ENCODE measurements at regions of chr3 and their contacts with region 1.

Region 1: DNA sequence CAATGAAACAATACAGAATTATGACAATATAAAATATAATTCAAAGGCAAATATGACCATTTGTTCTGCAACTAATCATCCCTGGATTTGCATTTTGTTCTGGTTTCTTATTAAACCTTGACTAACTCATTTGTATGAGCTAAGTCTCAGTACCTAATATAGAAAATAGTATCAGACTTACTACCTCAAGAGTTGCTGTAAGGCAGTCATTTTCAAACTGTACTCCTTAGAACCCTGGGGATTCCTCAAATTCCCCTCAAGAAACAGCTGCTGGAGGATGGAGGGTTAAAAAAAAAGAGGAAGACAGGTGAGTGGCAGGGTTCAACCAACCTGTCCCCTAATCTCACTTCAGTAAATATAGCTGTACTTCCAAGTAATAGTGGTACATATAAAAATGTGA is 11.1 kb downstream of the ZBTB11 start:
- DNase-seq: no peak
- ATAC-seq: no peak
- H3K4me3 ChIP-seq: no peak overlapping the region
- H3K27ac ChIP-seq: no peak overlapping the region
- H3K4me1 ChIP-seq: no peaks in the 10 kb centered on the region
- H3K27me3 ChIP-seq: no peaks in the 10 kb centered on the region

Region 2: DNA sequence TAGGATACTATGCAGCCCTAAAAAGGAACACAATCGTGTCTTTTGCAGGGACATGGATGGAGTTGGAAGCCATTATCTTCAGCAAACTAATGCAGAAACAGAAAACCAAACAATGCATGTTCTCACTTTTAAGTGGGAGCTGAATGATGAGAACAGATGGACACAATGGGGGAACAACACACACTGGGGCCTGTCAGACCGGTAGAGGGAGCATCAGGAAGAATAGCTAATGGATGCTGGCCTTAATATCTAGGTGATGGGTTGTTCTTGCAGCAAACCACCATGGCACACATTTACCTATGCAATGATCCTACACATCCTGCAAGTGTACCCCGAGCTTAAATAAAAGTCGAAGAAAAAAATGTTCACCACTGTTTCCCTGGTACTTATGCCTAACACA is 170.3 kb before region 1 on chr3:
- intact Hi-C with region 1: no loop called
- DNase-seq: no peak
- ATAC-seq: no peak
- H3K4me3 ChIP-seq: no peak overlapping the region
- H3K27ac ChIP-seq: no peak overlapping the region
- H3K4me1 ChIP-seq: no peaks in the 10 kb centered on the region
- H3K27me3 ChIP-seq: no peaks in the 10 kb centered on the region

Region 3: GRCh38 chr3:101591071-101591470 is 74.8 kb before region 1 on chr3:
- intact Hi-C with region 1: loop called in 1 of 4 experiments (anchors 10 kb)
- DNase-seq: no peak
- ATAC-seq: no peak
- H3K4me3 ChIP-seq: no peak overlapping the region
- H3K27ac ChIP-seq: no peak overlapping the region
- H3K4me1 ChIP-seq: peaks cover 3% of the 10 kb centered on the region
- H3K27me3 ChIP-seq: no peaks in the 10 kb centered on the region

Region 4: GRCh38 chr3:101813817-101814440 is 148.1 kb after region 1 on chr3:
- intact Hi-C with region 1: no loop called
- DNase-seq: no peak
- ATAC-seq: no peak
- H3K4me3 ChIP-seq: no peak overlapping the region
- H3K27ac ChIP-seq: no peak overlapping the region
- H3K4me1 ChIP-seq: peaks cover 3% of the 10 kb centered on the region
- H3K27me3 ChIP-seq: no peaks in the 10 kb centered on the region